Activated CD4-positive, alpha-beta memory T cell treated with anti-CD3 and anti-CD28 coated beads, Interleukin-2, amount 10 ng/mL, durations not matched to agents 7 days and 5 days (primary cell): ENCODE measurements at regions of chr7 and their contacts with region 1.

Region 1: DNA sequence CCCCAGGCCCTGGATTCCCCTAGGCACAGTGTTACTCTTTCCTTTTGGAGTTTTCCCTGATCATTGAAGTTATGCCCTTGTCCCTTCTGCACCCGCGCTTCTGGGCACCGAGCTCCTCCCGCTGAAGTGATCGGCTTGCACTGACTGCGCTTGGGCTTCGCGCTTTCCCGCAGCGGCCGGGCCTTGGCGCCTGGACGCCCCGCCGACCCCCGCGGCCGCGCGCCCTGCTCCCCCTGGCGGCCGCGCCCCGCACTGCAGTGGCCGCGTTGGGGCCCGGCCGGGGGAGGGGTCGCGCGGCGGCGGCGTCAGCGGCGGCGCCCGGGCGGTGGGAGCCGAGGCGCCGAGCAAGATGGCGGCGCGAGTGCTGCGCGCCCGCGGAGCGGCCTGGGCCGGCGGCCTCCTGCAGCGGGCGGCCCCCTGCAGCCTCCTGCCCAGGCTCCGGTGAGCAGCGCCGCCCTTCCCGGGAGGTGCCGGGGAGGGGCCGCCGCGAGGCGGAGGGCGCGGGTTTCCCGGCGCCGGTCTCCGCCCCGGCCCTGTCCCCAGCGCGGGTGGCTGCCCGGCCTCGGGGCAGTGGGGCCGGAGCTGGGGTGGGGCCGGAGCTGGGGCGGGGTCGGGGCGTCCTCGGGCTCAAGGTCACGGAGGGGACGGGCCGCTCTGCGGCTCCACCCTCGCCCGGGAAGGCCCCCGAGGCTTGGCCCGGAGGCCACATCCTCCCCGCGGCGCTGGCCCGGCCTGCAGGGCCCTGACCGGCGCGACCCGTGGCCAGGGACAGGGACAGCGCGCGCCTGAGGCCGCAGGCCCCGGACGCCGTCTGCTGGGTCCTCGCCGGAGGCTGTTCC is at the start of gene NIPSNAP2:
- DNase-seq: peak; percentile 64
- H3K4me3 Mint-ChIP-seq: peak within 1 kb of the TSS; percentile 81
- H3K27ac Mint-ChIP-seq: peak within 1 kb of the TSS; percentile 80
- H3K4me1 Mint-ChIP-seq: peaks cover 24% of the 10 kb centered on the region
- H3K27me3 Mint-ChIP-seq: no peaks in the 10 kb centered on the region
- total RNA-seq, gene NIPSNAP2: 31.5 to 31.7 TPM

Region 2: DNA sequence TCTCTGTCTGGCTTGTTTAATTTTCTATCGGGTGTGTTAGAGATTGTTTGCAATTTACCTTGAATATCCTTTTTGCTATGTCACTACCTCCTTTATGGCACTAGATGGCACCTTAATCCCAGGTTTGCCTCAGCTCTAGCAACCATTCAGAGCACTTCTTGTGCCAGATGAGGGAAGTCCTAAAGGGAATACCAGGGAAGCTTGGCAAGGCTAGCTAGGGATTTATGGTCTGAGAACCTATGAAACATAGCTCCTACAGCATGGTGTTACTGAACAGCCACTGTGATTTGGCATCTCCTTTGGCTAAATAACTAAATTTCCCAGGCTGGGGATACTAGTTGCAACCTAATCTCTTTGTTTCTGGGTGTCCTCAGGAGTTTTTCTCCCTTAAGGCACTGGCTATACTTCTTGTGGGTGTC is 323.2 kb before region 1 on chr7:
- CTCF ChIA-PET with region 1: interaction called, 10 read pairs
- POLR2A ChIA-PET with region 1: no interaction called
- DNase-seq: peak; percentile 35
- H3K4me3 Mint-ChIP-seq: no peak overlapping the region
- H3K27ac Mint-ChIP-seq: no peak overlapping the region
- H3K4me1 Mint-ChIP-seq: peaks cover 12% of the 10 kb centered on the region
- H3K27me3 Mint-ChIP-seq: peaks cover 6% of the 10 kb centered on the region

Region 3: GRCh38 chr7:56063882-56064625 is 99.6 kb after region 1 on chr7 and contains the start of gene SUMF2:
- CTCF ChIA-PET with region 1: interaction called, 6 read pairs
- POLR2A ChIA-PET with region 1: interaction called, 10 read pairs
- DNase-seq: peak; percentile 89
- H3K4me3 Mint-ChIP-seq: peak within 1 kb of the TSS; percentile 87
- H3K27ac Mint-ChIP-seq: peak within 1 kb of the TSS; percentile 82
- H3K4me1 Mint-ChIP-seq: peaks cover 43% of the 10 kb centered on the region
- H3K27me3 Mint-ChIP-seq: no peaks in the 10 kb centered on the region
- total RNA-seq, gene SUMF2: 118 to 119 TPM

Region 4: DNA sequence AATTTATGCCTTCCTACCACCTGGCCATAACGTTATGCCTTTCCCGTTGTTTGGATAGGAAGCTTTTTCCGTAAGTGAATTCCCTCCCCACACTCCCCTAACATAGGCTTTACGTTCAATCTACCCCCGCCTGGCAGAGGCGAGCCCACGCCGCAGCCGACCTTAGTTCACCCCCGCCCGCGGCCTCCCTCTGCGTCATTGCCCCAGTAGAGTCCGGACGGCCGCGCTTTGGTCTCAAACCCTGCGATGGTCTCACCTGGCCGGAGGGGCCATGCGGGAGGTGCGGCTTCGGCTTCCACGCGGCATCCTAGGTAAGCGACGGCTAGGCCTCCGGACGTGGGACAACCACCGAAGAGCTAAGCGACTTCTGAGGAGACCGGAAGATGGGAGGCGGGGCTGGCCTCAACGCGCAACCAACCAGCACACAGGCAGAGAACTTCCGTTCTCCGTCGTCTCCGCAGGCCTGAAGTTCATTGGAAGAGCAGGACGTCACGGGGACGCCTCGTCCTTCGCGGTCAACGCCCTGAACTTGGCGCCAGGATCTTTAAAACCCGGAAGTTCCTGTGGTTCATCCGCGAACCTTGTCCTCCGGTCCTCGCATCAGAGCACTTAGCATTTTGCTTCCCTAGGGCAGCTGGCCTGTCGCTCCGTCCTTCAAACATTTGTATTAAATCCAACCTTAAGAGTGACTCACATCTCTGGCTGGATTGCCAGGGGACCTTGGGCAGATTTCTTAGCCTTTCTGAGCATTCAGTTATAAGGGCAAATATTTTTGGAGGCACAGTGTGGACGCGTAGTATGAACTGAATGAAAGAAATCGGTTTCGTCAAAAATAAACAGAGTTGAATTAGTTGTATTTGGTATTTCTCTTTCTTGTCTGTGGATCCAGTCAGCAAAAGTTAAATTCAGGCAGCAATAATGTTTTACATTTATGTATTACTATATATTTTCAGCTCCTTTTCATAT is 141.9 kb after region 1 on chr7 and contains the start of gene CHCHD2:
- CTCF ChIA-PET with region 1: no interaction called
- POLR2A ChIA-PET with region 1: interaction called, 16 read pairs
- DNase-seq: peak; percentile 96
- H3K4me3 Mint-ChIP-seq: peak within 1 kb of the TSS; percentile 99
- H3K27ac Mint-ChIP-seq: peak within 1 kb of the TSS; percentile 94
- H3K4me1 Mint-ChIP-seq: peaks cover 44% of the 10 kb centered on the region
- H3K27me3 Mint-ChIP-seq: no peaks in the 10 kb centered on the region
- total RNA-seq, gene CHCHD2: 482 to 505 TPM